Adrenal gland (tissue), 19 donors: ENCODE measurements at regions of chr2 and their contacts with region 1.

Region 1: DNA sequence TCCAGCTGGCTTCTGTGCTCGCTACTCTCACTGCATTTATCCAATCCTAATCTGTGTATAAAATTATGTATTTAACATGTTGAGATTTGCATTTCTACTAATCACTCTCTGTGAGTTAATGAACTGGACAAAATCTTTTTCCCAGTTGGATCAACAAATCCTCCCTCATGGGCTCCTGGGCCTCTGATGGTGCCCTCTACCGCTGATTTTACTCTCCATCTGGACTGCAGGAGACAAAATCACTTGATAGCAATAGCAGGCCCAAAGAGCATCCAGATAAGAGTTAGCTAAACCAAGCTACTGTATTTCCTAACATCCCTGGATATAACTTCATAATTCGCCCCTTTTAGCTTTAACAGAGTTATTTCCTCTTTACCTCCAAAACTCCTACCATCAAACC is 14.4 kb downstream of the REG3G start:
- DNase-seq: no peak
- H3K4me3 ChIP-seq: no peak overlapping the region
- H3K27ac ChIP-seq: no peak overlapping the region
- H3K4me1 ChIP-seq: no peaks in the 10 kb centered on the region
- H3K27me3 ChIP-seq: no peaks in the 10 kb centered on the region
- CTCF ChIP-seq: no peak
- POLR2A ChIP-seq: no peak

Region 2: GRCh38 chr2:79219383-79219988 is 179.5 kb after region 1 on chr2:
- intact Hi-C with region 1: loop called in 1 of 2 experiments (anchors 5 kb)
- DNase-seq: peak; percentile 32 to 72 (median 41)
- H3K4me3 ChIP-seq: no peak overlapping the region
- H3K27ac ChIP-seq: no peak overlapping the region
- H3K4me1 ChIP-seq: no peaks in the 10 kb centered on the region
- H3K27me3 ChIP-seq: no peaks in the 10 kb centered on the region
- CTCF ChIP-seq: peak; percentile 62 to 81 (median 66)
- POLR2A ChIP-seq: no peak

Region 3: DNA sequence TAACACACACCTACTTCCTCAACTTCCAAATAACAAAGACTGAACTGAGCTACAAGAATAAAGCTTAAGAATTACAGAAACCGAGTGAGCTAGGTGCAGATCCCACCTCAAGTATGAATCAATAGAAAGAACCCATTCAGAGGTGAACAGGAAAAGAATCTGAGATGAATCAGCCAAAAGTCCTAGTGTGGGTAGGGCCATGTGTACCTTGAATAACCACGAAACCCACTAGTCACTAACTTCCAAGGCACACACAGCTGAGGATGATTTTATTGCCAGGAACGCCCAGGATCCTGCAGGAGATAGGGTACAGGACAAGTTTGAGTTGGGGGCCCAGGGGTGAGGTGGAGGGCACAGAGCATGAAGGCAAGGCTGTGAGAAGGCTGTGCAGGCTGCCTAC is 219.4 kb after region 1 on chr2:
- intact Hi-C with region 1: no loop called
- DNase-seq: no peak
- H3K4me3 ChIP-seq: no peak overlapping the region
- H3K27ac ChIP-seq: no peak overlapping the region
- H3K4me1 ChIP-seq: no peaks in the 10 kb centered on the region
- H3K27me3 ChIP-seq: no peaks in the 10 kb centered on the region
- CTCF ChIP-seq: no peak
- POLR2A ChIP-seq: no peak